HepG2 (cell line): ENCODE measurements at regions of chr3 and their contacts with region 1.

Region 1: DNA sequence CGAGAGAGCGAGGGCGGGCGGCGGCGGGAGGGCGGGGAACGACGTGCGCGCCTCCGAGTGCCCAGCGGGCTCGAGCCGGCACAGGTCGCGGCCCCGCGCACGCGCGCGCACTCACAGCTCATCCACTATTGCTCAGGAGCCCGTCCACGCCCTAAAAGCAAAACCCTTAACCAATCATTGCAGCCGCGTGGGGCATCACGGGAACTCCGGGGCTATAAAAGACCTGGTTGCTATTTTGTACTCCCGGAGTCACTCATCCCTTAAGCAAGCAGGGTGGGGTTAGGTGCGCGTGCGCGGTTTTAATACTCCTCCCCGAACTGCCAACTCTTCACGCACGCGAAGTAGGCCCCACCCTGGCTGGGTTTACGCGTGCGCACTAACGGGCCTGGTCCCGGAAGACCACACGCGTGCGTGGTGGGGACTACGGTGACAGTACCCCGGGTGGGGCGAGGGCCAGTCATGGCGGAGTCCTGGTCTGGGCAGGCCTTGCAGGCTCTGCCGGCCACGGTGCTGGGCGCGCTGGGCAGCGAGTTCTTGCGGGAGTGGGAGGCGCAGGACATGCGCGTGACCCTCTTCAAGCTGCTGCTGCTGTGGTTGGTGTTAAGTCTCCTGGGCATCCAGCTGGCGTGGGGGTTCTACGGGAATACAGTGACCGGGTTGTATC is at the starts of genes RHOA and TCTA:
- DNase-seq: peak; percentile 99
- ATAC-seq: peak; percentile 90
- H3K4me3 ChIP-seq: peak within 1 kb of the TSS; percentile 81 to 93 (median 90)
- H3K27ac ChIP-seq: peak within 1 kb of the TSS; percentile 91
- H3K4me1 ChIP-seq: peaks cover 47% of the 10 kb centered on the region
- H3K27me3 ChIP-seq: no peaks in the 10 kb centered on the region; a peak in 1 of 5 replicates
- CTCF ChIP-seq: peak; percentile 32; the same call in 1 of the 2 replicates
- EP300 ChIP-seq: no peak; a peak in 1 of 4 replicates
- POLR2A ChIP-seq: peak; percentile 96 to 99
- RAD21 ChIP-seq: peak; percentile 30; the same call in 1 of the 2 replicates
- total RNA-seq, gene RHOA: 177 and 258 TPM in 2 replicates
- total RNA-seq, gene TCTA: 6.7 and 8.3 TPM in 2 replicates

Region 2: DNA sequence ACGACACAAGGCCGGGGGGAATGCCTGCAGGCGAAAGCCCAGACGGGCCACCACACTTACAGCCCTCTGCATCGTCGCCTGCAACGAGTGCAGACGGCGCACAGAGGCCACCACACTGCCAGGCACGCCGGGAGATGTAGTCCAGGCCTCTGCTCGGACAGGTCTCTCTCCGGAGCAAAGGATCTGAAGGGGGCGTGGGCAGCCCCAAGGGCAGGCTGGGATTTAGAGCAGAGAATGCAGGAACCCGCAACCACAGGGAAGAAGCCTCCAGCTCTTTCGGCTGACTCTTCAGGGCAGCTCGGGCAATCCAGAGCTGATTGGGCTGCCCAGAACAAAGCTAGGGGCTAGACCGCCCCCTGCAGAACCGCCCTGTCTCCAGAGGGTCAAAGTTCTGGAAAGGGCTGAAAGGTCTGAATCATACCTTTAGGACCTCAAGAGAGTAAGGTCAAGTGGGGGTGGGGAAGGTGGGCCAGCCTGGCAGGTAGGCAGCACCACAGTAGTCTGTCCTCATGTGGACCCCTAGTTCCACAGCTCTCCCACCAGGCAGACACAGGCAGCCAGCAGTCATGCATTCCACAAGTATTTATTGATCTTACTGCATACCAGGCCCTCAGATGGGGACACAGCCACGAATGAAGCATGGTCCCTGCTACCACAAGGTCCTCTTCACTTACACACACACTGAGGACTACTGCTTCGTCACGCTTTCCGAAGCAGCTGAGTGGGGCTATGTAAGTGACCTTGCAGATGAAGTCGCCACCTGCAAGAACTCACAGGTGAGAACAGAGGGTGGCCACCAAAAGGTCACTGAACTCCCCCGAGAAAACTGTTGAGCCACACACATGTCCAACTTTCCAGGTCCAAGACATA is 10.5 kb after region 1 on chr3 and contains the start of gene AMT:
- CTCF ChIA-PET with region 1: no interaction called
- POLR2A ChIA-PET with region 1: interaction called, 48 read pairs
- in situ Hi-C with region 1: no loop called
- intact Hi-C with region 1: no loop called
- DNase-seq: peak; percentile 83
- ATAC-seq: peak; percentile 91
- H3K4me3 ChIP-seq: peak within 1 kb of the TSS; percentile 60 to 89 (median 64)
- H3K27ac ChIP-seq: peak within 1 kb of the TSS; percentile 89
- H3K4me1 ChIP-seq: peaks cover 55% of the 10 kb centered on the region
- H3K27me3 ChIP-seq: no peaks in the 10 kb centered on the region
- CTCF ChIP-seq: peak; percentile 30; the same call in 1 of the 2 replicates
- EP300 ChIP-seq: peak in 1 of 2 experiments; percentile 47; a peak in 2 of 4 replicates
- POLR2A ChIP-seq: peak; percentile 61 to 75; a peak in 2 of 4 replicates
- RAD21 ChIP-seq: no peak; the same call in 1 of the 2 replicates
- total RNA-seq, gene AMT: 32.5 and 35.3 TPM in 2 replicates

Region 3: GRCh38 chr3:49428697-49429100 is 16.6 kb after region 1 on chr3:
- CTCF ChIA-PET with region 1: no interaction called
- POLR2A ChIA-PET with region 1: interaction called, 35 read pairs
- in situ Hi-C with region 1: no loop called
- intact Hi-C with region 1: no loop called
- DNase-seq: no peak
- ATAC-seq: peak; percentile 24
- H3K4me3 ChIP-seq: peak overlapping the region; percentile 72 to 89 (median 87)
- H3K27ac ChIP-seq: peak overlapping the region; percentile 90
- H3K4me1 ChIP-seq: peaks cover 43% of the 10 kb centered on the region
- H3K27me3 ChIP-seq: no peaks in the 10 kb centered on the region; a peak in 2 of 5 replicates
- CTCF ChIP-seq: peak; percentile 10
- EP300 ChIP-seq: no peak
- POLR2A ChIP-seq: no peak
- RAD21 ChIP-seq: no peak

Region 4: DNA sequence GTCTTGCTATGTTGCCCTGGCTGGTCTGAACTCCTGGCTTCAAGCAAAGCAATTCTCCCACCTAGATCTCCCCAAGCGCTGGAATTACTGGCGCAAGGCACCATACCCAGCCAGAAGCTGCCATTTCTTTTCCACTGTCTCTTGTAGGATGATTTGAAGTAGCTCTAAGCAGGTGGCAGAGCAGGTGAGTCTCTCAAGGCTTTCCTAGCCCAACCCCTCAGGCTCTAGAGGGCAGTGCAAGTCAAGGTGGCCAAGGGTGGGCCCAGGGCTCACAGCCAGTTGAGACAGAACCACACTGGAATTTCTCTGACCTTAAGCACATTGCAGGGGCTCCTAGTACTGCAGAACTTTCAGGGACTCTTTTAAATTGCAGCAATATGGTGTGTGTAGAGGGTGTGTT is 42.4 kb after region 1 on chr3:
- CTCF ChIA-PET with region 1: interaction called, 15 read pairs
- POLR2A ChIA-PET with region 1: interaction called, 7 read pairs
- in situ Hi-C with region 1: no loop called
- intact Hi-C with region 1: loop called (anchors 2 kb)
- DNase-seq: peak; percentile 66
- ATAC-seq: peak; percentile 91
- H3K4me3 ChIP-seq: no peak overlapping the region
- H3K27ac ChIP-seq: no peak overlapping the region
- H3K4me1 ChIP-seq: peaks cover 46% of the 10 kb centered on the region
- H3K27me3 ChIP-seq: no peaks in the 10 kb centered on the region
- CTCF ChIP-seq: peak; percentile 90
- EP300 ChIP-seq: no peak
- POLR2A ChIP-seq: no peak
- RAD21 ChIP-seq: peak; percentile 63